CD14-positive monocyte (primary cell): ENCODE measurements at regions of chr5 and their contacts with region 1.

Region 1: DNA sequence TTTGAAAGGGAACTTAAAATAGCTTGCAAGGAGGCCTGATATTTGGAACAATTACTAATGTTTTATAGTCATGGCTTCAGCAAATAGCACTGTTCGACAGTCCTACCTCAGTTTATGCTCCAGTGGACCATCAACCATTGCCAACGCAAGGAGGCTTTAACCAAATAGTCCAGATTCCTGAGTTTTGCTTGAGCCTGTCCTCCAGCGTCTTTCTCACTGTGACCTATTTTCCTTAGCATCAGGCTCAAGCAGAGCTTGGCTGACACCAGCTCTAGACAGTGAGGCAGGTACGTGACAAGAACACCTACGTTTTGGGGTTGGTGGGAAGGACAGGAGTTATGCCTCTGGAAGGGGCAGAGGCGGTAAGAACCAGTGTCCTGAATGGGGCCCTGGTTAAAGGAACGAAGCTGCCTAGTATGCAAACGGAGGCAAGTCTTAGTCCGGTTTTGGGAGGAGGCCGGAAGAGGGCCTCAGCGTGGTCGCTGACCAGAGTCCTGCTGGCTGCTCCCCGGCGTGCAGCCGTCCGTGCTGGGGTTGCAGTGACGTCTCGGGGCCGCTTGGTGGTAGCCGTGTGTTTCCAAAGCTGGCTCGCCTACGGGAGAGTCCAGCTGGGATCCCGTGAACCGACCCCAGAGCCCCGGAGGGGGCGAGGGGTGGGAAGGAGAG is 998 bp upstream of the FGF18 start:
- DNase-seq: peak; percentile 32 to 47 (median 33)
- H3K4me3 ChIP-seq: peak overlapping the region in 1 of 3 experiments; percentile 25
- H3K4me3 Mint-ChIP-seq: peak overlapping the region in 1 of 2 donors; percentile 64
- H3K27ac ChIP-seq: no peak overlapping the region
- H3K27ac Mint-ChIP-seq: no peak overlapping the region
- H3K4me1 ChIP-seq: peaks cover 6 to 27% of the 10 kb centered on the region in 2 donors
- H3K4me1 Mint-ChIP-seq: peaks cover 16% of the 10 kb centered on the region
- H3K27me3 ChIP-seq: peaks cover 16 to 36% of the 10 kb centered on the region in 2 donors
- H3K27me3 Mint-ChIP-seq: peaks cover 27 to 47% (median 39%) of the 10 kb centered on the region in 3 donors
- CTCF ChIP-seq: peak; percentile 89

Region 2: GRCh38 chr5:171907725-171908343 is 489.4 kb after region 1 on chr5:
- intact Hi-C with region 1: loop called (anchors 5 kb)
- DNase-seq: peak; percentile 30 to 50 (median 50)
- H3K4me3 ChIP-seq: no peak overlapping the region
- H3K4me3 Mint-ChIP-seq: no peak overlapping the region
- H3K27ac ChIP-seq: no peak overlapping the region
- H3K27ac Mint-ChIP-seq: no peak overlapping the region
- H3K4me1 ChIP-seq: peaks cover 15 to 16% of the 10 kb centered on the region in 2 donors
- H3K4me1 Mint-ChIP-seq: peaks cover 24% of the 10 kb centered on the region
- H3K27me3 ChIP-seq: no peaks in the 10 kb centered on the region
- H3K27me3 Mint-ChIP-seq: peaks cover 0 to 2% (median 0%) of the 10 kb centered on the region in 3 donors
- CTCF ChIP-seq: peak; percentile 89

Region 3: GRCh38 chr5:172044631-172045314 is 626.3 kb after region 1 on chr5:
- intact Hi-C with region 1: loop called in 1 of 2 experiments (anchors 10 kb)
- DNase-seq: no peak
- H3K4me3 ChIP-seq: no peak overlapping the region
- H3K4me3 Mint-ChIP-seq: no peak overlapping the region
- H3K27ac ChIP-seq: peak overlapping the region in 1 of 2 donors; percentile 20
- H3K27ac Mint-ChIP-seq: peak overlapping the region in 6 of 7 donors; percentile 8 to 79 (median 60)
- H3K4me1 ChIP-seq: no peaks in the 10 kb centered on the region
- H3K4me1 Mint-ChIP-seq: peaks cover 4% of the 10 kb centered on the region
- H3K27me3 ChIP-seq: no peaks in the 10 kb centered on the region
- H3K27me3 Mint-ChIP-seq: peaks cover 0 to 2% (median 0%) of the 10 kb centered on the region in 3 donors
- CTCF ChIP-seq: no peak